Activated naive CD4-positive, alpha-beta T cell treated with anti-CD3 and anti-CD28 coated beads for 36 hours (primary cell): ENCODE measurements at regions of chrX and their contacts with region 1.

Region 1: DNA sequence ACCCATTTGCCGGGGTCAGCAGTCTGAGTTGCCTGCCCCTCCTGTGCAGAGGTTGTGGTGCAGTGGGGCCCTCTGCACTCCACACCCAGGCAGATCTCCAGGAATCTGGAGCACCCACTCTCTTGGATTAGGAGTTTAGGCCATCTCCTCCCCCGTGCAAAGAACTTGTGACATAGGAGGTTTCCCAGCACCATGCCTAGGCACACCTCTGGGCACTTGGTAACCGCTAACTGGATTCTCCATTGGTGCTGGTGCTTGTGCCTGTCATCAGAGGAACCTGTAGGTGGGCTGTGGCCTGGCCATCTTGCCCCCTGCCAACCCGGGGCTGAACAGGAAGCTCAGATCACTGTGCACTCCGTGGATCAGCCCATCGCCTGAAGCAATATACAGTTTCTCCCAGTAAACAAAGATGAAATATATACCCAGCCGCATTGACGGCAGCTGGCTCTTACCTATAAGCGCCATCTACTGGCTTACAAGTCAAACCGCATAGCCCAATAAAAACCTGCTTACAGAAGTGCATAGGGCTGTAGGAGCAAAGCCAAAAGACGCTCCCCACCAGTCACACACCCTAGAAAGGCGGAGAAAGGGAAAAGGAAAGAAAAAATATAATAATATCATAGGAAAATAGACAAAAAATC is 19.1 kb upstream of the TEX13B start:
- DNase-seq: peak; percentile 37
- H3K4me3 Mint-ChIP-seq: no peak overlapping the region
- H3K27ac Mint-ChIP-seq: peak overlapping the region; percentile 30
- H3K4me1 Mint-ChIP-seq: peaks cover 5% of the 10 kb centered on the region
- H3K27me3 Mint-ChIP-seq: no peaks in the 10 kb centered on the region

Region 2: DNA sequence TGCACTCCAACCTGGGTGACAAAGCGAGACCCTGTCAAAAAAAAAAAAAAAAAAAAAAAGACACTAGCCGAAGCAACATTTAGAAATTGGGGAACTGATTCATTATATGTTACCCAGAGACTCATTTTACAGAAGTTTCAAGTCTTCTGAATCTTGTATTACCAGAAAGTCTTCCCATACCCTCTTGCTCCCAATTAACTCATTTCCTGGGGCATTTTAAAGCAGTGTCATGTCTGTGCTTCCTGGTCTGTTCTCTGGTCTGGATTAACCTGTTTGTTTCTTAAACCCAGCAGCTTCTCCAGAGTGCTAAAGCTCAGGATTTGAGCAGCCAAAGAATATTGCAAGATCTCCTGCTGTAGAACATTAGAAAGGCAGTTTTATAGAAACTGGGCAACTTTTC is 508.2 kb before region 1 on chrX:
- CTCF ChIA-PET with region 1: no interaction called
- intact Hi-C with region 1: no loop called
- DNase-seq: no peak
- H3K4me3 Mint-ChIP-seq: no peak overlapping the region
- H3K27ac Mint-ChIP-seq: no peak overlapping the region
- H3K4me1 Mint-ChIP-seq: no peaks in the 10 kb centered on the region
- H3K27me3 Mint-ChIP-seq: no peaks in the 10 kb centered on the region

Region 3: GRCh38 chrX:107537815-107538214 is 463.5 kb before region 1 on chrX:
- CTCF ChIA-PET with region 1: no interaction called
- intact Hi-C with region 1: loop called (anchors 1 kb)
- DNase-seq: peak; percentile 68
- H3K4me3 Mint-ChIP-seq: no peak overlapping the region
- H3K27ac Mint-ChIP-seq: no peak overlapping the region
- H3K4me1 Mint-ChIP-seq: no peaks in the 10 kb centered on the region
- H3K27me3 Mint-ChIP-seq: peaks cover 3% of the 10 kb centered on the region

Region 4: DNA sequence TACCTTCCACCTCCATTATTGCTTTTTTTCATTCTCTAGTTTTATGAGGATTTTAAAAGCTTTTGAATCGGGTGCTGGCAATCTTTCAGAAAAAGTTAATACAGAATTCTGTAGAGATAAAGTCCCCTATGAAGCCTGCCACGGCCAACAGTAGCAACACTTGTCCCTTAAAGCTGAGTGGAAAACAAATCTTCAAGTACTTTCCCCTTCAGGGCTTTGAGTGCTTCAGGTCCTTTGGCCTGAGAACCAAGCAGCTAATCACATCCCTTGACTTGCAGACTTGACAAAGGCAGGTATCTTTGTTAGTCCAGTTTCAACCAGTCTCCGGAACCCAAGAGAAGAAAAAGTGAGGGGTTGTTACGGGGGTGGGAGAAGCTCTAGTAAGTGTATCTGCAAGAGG is 234.7 kb after region 1 on chrX:
- CTCF ChIA-PET with region 1: no interaction called
- intact Hi-C with region 1: no loop called
- DNase-seq: no peak
- H3K4me3 Mint-ChIP-seq: no peak overlapping the region
- H3K27ac Mint-ChIP-seq: no peak overlapping the region
- H3K4me1 Mint-ChIP-seq: no peaks in the 10 kb centered on the region
- H3K27me3 Mint-ChIP-seq: no peaks in the 10 kb centered on the region